HepG2 (cell line): ENCODE measurements at regions of chr4 and their contacts with region 1.

Region 1: GRCh38 chr4:38387348-38387747 is 276.7 kb upstream of the KLF3 start:
- DNase-seq: peak; percentile 50
- ATAC-seq: no peak; the same call in 2 of the 3 replicates
- H3K4me3 ChIP-seq: no peak overlapping the region
- H3K27ac ChIP-seq: peak overlapping the region; percentile 96
- H3K4me1 ChIP-seq: peaks cover 70% of the 10 kb centered on the region
- H3K27me3 ChIP-seq: no peaks in the 10 kb centered on the region
- CTCF ChIP-seq: no peak
- EP300 ChIP-seq: no peak
- POLR2A ChIP-seq: no peak
- RAD21 ChIP-seq: no peak

Region 2: GRCh38 chr4:38310446-38311043 is 76.8 kb before region 1 on chr4:
- CTCF ChIA-PET with region 1: no interaction called
- POLR2A ChIA-PET with region 1: no interaction called
- in situ Hi-C with region 1: no loop called
- intact Hi-C with region 1: no loop called
- DNase-seq: no peak
- ATAC-seq: peak; percentile 68
- H3K4me3 ChIP-seq: no peak overlapping the region
- H3K27ac ChIP-seq: no peak overlapping the region
- H3K4me1 ChIP-seq: peaks cover 29% of the 10 kb centered on the region
- H3K27me3 ChIP-seq: no peaks in the 10 kb centered on the region; a peak in 1 of 5 replicates
- CTCF ChIP-seq: no peak
- EP300 ChIP-seq: no peak
- POLR2A ChIP-seq: no peak
- RAD21 ChIP-seq: no peak

Region 3: DNA sequence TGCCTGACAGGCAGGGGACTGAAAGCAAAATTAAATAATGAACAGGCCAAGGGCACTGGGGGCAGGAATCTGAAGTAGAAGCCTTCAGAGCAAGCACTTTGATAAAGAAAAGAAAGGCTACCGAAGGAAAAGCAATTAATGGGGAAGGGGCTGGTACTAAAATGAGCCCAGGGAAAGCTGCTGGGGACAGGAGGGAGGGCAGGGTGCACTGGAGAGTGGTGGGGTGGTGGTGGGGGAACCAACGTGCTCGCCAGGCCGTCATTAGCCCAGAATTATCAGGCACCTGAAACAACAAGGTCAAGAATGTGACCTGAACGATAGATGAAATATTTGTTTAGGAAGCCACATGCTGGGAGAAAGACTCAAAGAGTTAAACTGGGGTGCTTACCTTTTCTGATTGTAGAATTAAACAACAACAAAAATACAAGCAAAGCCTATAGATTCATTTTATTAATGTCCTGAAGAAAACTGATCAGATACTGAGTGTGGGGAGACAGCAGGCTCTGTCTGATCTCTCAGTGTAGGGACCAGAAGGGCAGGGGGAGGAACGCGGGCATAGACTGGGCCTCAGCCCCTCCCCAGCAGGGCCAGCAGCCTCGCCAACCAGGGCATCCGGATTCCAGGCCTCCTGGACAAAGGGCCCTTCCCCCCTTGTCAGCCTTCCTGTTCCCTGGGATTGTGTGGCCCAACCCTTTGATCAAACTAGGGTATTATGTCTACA is 37.0 kb after region 1 on chr4:
- CTCF ChIA-PET with region 1: no interaction called
- POLR2A ChIA-PET with region 1: no interaction called
- in situ Hi-C with region 1: no loop called
- intact Hi-C with region 1: loop called (anchors 1 kb)
- DNase-seq: peak; percentile 93
- ATAC-seq: peak; percentile 100
- H3K4me3 ChIP-seq: peak overlapping the region; percentile 3 to 38 (median 12); a peak in 3 of 6 replicates
- H3K27ac ChIP-seq: peak overlapping the region; percentile 81
- H3K4me1 ChIP-seq: peaks cover 44% of the 10 kb centered on the region
- H3K27me3 ChIP-seq: no peaks in the 10 kb centered on the region
- CTCF ChIP-seq: no peak
- EP300 ChIP-seq: peak in 1 of 2 experiments; percentile 65; a peak in 2 of 4 replicates
- POLR2A ChIP-seq: no peak
- RAD21 ChIP-seq: no peak; the same call in 1 of the 2 replicates

Region 4: DNA sequence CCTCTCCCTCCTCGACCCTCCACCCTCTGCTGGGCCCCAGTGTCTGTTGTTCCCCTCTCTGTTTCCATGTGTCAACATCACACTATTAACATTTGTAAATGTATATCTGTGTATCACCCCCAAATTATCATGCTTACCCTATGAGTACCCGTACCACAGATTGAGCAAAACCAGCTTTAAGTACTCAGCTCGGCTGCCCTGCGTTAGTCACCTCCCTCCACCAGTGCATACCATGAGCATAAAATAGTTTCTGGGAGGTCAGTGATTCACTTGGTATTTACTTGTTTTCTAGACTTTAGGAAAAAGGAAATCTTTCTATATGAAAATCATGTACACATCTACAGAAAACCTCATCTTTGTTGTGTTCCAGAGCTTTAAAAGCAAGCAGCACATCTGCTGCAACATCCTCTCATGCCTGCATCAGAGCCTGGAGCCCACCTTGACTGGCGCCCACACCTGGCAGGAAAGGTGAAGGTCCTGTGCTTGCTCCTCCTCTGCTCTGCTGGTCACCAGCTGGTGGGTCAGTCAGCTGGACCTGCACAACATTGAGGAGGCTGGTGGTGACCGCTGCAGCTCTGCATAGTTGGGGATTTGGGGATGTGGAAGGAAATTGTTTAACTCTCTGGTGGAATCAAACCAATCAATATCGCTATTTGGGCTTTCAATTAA is 62.3 kb after region 1 on chr4:
- CTCF ChIA-PET with region 1: no interaction called
- POLR2A ChIA-PET with region 1: interaction called, 14 read pairs
- in situ Hi-C with region 1: no loop called
- intact Hi-C with region 1: no loop called
- DNase-seq: peak; percentile 51
- ATAC-seq: peak; percentile 98
- H3K4me3 ChIP-seq: peak overlapping the region in 2 of 3 experiments; percentile 14 to 30; a peak in 3 of 6 replicates
- H3K27ac ChIP-seq: peak overlapping the region; percentile 48
- H3K4me1 ChIP-seq: peaks cover 33% of the 10 kb centered on the region
- H3K27me3 ChIP-seq: no peaks in the 10 kb centered on the region
- CTCF ChIP-seq: peak; percentile 86
- EP300 ChIP-seq: no peak; a peak in 1 of 4 replicates
- POLR2A ChIP-seq: no peak
- RAD21 ChIP-seq: peak; percentile 43